ENCODE measurements at regions of chr14 and their contacts with region 1.

Region 1: GRCh38 chr14:50667996-50668825 is at the start of gene SAV1:
- DNase-seq: peak; percentile 49 to 75 (median 64)
- ATAC-seq: peak; percentile 72
- H3K4me3 ChIP-seq: peak within 1 kb of the TSS; percentile 71
- H3K27ac ChIP-seq: peak within 1 kb of the TSS; percentile 83
- H3K4me1 ChIP-seq: peaks cover 0 to 2% of the 10 kb centered on the region in 2 experiments; a peak in 3 of 5 replicates
- H3K27me3 ChIP-seq: no peaks in the 10 kb centered on the region
- CTCF ChIP-seq: no peak
- EP300 ChIP-seq: no peak
- POLR2A ChIP-seq: peak; percentile 97
- RAD21 ChIP-seq: no peak
- polyA plus RNA-seq, gene SAV1: 6.5 to 6.9 TPM

Region 2: GRCh38 chr14:50649691-50650090 is 18.5 kb before region 1 on chr14:
- CTCF ChIA-PET with region 1: no interaction called
- POLR2A ChIA-PET with region 1: interaction called, 11 read pairs
- in situ Hi-C with region 1: no loop called
- intact Hi-C with region 1: no loop called
- DNase-seq: no peak
- ATAC-seq: no peak
- H3K4me3 ChIP-seq: no peak overlapping the region
- H3K27ac ChIP-seq: no peak overlapping the region
- H3K4me1 ChIP-seq: peaks cover 0 to 6% of the 10 kb centered on the region in 2 experiments; a peak in 3 of 5 replicates
- H3K27me3 ChIP-seq: no peaks in the 10 kb centered on the region
- CTCF ChIP-seq: no peak
- EP300 ChIP-seq: no peak
- POLR2A ChIP-seq: no peak
- RAD21 ChIP-seq: no peak

Region 3: GRCh38 chr14:51056421-51056820 is 388.2 kb after region 1 on chr14:
- CTCF ChIA-PET with region 1: no interaction called
- POLR2A ChIA-PET with region 1: no interaction called
- in situ Hi-C with region 1: no loop called
- intact Hi-C with region 1: no loop called
- DNase-seq: no peak
- ATAC-seq: no peak
- H3K4me3 ChIP-seq: no peak overlapping the region
- H3K27ac ChIP-seq: no peak overlapping the region
- H3K4me1 ChIP-seq: no peaks in the 10 kb centered on the region
- H3K27me3 ChIP-seq: no peaks in the 10 kb centered on the region
- CTCF ChIP-seq: no peak
- EP300 ChIP-seq: no peak
- POLR2A ChIP-seq: no peak
- RAD21 ChIP-seq: no peak